Activated B cell treated with CpG ODN at 0.5 μM for 24 hours (primary cell): ENCODE measurements at regions of chr2 and their contacts with region 1.

Region 1: DNA sequence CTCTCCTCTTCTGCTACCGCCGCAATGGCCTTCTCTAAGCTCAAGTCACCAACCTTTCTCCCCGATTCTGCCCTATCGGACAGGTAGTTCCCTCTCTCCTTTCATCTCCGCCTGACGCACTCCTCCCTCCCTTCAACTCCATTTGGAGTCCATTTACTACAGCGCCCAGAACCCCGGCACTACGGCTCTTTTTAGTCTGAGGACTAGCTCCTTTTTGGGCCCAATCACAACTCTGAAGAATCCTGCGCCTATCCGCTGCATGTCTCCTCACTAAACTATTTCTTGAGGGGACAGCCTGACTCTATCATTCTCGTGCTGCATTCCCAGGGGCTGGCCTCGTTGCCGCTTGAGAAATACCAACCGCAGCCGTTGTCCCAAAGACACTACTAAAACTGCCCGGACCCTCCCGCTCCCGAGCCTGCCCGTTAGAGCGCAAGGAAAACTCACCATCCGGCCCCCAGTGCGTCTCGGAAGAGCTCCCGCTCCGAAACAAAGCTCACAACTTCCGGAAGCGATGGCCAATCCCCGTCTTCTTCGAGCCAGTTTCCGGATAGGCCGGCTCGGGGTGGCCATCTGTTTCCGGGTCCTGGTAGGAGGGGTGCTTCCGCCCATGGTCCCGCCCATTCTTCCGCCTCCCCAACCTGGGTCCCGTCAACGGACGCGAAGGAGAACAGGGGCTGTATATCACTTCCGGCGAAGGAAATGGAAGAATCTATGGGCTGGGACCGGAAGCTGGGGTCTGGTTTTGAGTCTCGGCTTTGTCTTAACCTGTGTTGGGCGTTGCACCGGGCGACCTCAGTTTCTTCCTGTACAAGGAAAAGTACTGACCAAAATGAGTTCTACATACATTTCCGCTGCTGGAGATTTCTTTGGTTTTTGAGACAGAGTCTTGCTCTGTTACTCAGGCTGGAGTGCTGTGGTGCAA is at the start of gene TPRKB:
- DNase-seq: peak; percentile 85
- ATAC-seq: peak; percentile 98
- H3K4me3 Mint-ChIP-seq: peak within 1 kb of the TSS; percentile 94
- H3K27ac Mint-ChIP-seq: peak within 1 kb of the TSS; percentile 90
- H3K4me1 Mint-ChIP-seq: peaks cover 18% of the 10 kb centered on the region
- H3K27me3 Mint-ChIP-seq: no peaks in the 10 kb centered on the region
- CTCF ChIP-seq: no peak
- total RNA-seq, gene TPRKB: 26.9 and 27.1 TPM in 2 replicates

Region 2: DNA sequence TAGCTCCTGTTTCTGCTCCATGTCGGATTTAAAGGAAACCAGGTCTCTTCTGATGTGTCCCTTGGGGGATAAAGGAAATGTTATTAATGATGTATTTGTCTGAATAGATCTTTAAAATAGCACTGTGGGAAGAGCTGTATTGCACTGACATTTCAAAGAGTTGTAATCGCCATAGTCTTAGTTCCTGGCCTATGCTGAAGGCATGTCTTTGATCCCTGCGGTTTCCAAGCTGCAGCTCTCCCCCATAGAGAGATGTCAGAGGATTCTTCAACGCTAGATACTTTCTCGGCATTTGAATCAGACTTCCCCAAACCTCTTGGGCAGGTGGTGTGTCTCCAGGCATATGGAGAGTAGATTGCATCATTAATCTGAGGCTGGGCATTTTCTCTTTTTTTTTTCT is 135.3 kb before region 1 on chr2:
- CTCF ChIA-PET with region 1: no interaction called
- POLR2A ChIA-PET with region 1: no interaction called
- intact Hi-C with region 1: no loop called
- DNase-seq: no peak
- ATAC-seq: no peak
- H3K4me3 Mint-ChIP-seq: no peak overlapping the region
- H3K27ac Mint-ChIP-seq: no peak overlapping the region
- H3K4me1 Mint-ChIP-seq: no peaks in the 10 kb centered on the region
- H3K27me3 Mint-ChIP-seq: no peaks in the 10 kb centered on the region
- CTCF ChIP-seq: no peak

Region 3: GRCh38 chr2:73779467-73780236 is 42.5 kb after region 1 on chr2 and contains the start of gene DUSP11:
- CTCF ChIA-PET with region 1: no interaction called
- POLR2A ChIA-PET with region 1: interaction called, 5 read pairs
- intact Hi-C with region 1: loop called (anchors 1 kb)
- DNase-seq: peak; percentile 95
- ATAC-seq: peak; percentile 99
- H3K4me3 Mint-ChIP-seq: peak within 1 kb of the TSS; percentile 98
- H3K27ac Mint-ChIP-seq: peak within 1 kb of the TSS; percentile 96
- H3K4me1 Mint-ChIP-seq: peaks cover 26% of the 10 kb centered on the region
- H3K27me3 Mint-ChIP-seq: peaks cover 3% of the 10 kb centered on the region
- CTCF ChIP-seq: peak; percentile 71
- total RNA-seq, gene DUSP11: 25.6 and 30.5 TPM in 2 replicates

Region 4: GRCh38 chr2:74119912-74120825 is 383.1 kb after region 1 on chr2:
- CTCF ChIA-PET with region 1: no interaction called
- POLR2A ChIA-PET with region 1: interaction called, 5 read pairs
- intact Hi-C with region 1: loop called (anchors 1 kb)
- DNase-seq: peak; percentile 86
- ATAC-seq: peak; percentile 95
- H3K4me3 Mint-ChIP-seq: peak overlapping the region; percentile 89
- H3K27ac Mint-ChIP-seq: peak overlapping the region; percentile 94
- H3K4me1 Mint-ChIP-seq: peaks cover 6% of the 10 kb centered on the region
- H3K27me3 Mint-ChIP-seq: peaks cover 4% of the 10 kb centered on the region
- CTCF ChIP-seq: no peak